ENCODE measurements at regions of chr15 and their contacts with region 1.

Region 1: DNA sequence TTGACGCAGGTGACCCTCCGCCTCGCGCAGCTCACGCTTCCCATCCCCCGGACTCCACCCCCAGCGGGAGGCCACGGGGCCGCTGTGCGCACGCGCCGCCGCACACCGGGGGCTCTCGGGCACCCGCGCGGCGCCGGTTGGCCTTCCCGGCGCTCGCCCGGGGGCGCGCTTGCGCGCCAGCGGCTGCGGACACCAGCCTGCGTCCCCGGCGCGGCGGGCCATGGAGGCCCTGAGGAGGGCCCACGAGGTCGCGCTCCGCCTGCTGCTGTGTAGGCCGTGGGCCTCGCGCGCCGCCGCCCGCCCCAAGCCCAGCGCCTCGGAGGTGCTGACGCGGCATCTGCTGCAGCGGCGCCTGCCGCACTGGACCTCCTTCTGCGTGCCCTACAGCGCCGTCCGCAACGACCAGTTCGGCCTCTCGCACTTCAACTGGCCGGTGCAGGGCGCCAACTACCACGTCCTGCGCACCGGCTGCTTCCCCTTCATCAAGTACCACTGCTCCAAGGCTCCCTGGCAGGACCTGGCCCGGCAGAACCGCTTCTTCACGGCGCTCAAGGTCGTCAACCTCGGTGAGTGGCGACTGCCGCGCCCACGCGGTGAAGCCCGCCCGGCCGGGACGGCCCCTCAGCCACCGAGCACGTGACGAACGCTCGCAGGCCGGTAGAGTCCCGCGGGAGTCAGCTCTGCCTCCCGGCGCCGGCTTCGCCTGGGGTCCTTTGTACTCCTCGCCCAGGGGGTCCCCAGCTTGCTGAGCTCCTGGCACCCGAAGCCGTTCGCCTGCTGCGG is at the start of gene C15orf61:
- DNase-seq: no peak
- H3K4me3 ChIP-seq: peak within 1 kb of the TSS; percentile 77
- CTCF ChIP-seq: no peak

Region 2: DNA sequence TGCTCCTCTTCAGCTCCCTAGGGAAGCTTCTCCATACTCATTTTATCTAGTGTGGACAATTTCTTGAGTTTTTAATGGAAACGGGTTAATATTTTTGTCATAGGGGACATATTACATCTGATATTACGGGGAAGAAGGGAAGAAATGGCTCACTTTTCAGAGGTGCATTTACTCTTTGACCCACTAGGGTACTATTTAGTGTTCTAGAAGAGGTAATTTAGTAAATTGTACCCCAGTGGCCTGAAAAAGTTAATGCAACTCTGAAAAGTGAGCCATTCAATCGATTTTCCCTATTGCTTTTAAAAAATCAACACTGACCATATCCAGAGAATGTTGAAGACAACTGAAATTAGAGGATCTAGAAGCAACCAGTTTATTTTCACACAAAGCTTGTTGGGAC is 92.5 kb after region 1 on chr15:
- in situ Hi-C with region 1: loop called (anchors 5 kb)
- DNase-seq: no peak
- H3K4me3 ChIP-seq: no peak overlapping the region
- CTCF ChIP-seq: no peak